ENCODE measurements at regions of chr18 and their contacts with region 1.

Region 1: GRCh38 chr18:29664278-29665036 is 1378.1 kb downstream of the DSC3 start:
- DNase-seq: peak; percentile 22
- ATAC-seq: peak; percentile 98
- H3K4me3 ChIP-seq: no peak overlapping the region
- H3K27ac ChIP-seq: peak overlapping the region; percentile 22; the same call in 1 of the 2 replicates
- H3K4me1 ChIP-seq: peaks cover 12% of the 10 kb centered on the region
- H3K27me3 ChIP-seq: no peaks in the 10 kb centered on the region
- CTCF ChIP-seq: no peak

Region 2: DNA sequence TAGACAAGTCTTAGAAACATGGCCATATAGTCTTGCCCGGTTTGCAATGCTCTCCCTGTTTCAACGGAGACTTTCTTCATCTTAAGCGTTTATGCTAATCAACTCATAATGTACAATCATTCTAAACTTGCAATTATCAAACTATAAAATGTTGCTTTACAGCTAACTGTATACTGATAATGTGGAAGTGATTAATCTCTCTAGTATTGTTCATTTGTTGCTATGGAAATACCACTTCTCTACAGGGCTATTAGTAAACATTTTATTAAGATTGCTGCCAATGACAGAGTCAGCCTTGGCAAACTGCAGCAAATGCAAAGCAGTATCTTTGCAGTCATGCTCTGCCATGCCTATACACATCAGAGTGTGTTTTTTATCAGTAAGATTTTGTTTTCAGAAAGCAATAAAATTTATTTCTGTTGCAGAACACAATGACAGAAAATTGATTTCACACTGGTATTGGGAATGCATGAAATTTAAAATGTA is 285.8 kb before region 1 on chr18:
- CTCF ChIA-PET with region 1: no interaction called
- POLR2A ChIA-PET with region 1: no interaction called
- intact Hi-C with region 1: loop called (anchors 10 kb)
- DNase-seq: peak; percentile 45
- ATAC-seq: peak; percentile 77
- H3K4me3 ChIP-seq: no peak overlapping the region
- H3K27ac ChIP-seq: no peak overlapping the region
- H3K4me1 ChIP-seq: peaks cover 21% of the 10 kb centered on the region
- H3K27me3 ChIP-seq: no peaks in the 10 kb centered on the region
- CTCF ChIP-seq: no peak

Region 3: DNA sequence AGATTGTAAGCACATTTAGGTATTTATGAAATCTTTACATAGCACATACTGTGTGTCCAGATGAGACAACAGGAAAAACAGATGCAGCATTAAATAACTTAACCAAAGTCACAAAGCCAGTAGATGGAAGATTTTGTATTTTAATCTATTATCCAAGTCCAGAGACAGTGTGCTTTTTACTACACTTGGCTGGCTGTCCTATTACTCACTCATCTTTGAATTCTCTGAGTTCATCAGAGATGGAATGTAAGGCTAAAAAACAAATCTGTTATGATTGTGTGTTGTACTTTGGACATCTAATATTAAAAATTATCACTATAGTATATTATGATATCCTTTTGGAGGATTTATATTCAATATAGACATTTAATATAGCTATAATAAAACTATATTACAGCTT is 188.7 kb after region 1 on chr18:
- CTCF ChIA-PET with region 1: no interaction called
- POLR2A ChIA-PET with region 1: no interaction called
- intact Hi-C with region 1: loop called (anchors 10 kb)
- DNase-seq: peak; percentile 30
- ATAC-seq: 0 out of 2 replicates have a peak, but pooled peaks have one; percentile 44
- H3K4me3 ChIP-seq: no peak overlapping the region
- H3K27ac ChIP-seq: no peak overlapping the region
- H3K4me1 ChIP-seq: no peaks in the 10 kb centered on the region
- H3K27me3 ChIP-seq: no peaks in the 10 kb centered on the region
- CTCF ChIP-seq: no peak

Measured in PC-3 (cell line).